Caco-2 (cell line): ENCODE measurements at regions of chr3 and their contacts with region 1.

Region 1: GRCh38 chr3:39981547-39982184 is 172.3 kb downstream of the MYRIP start:
- DNase-seq: no peak
- H3K4me3 ChIP-seq: no peak overlapping the region
- H3K4me3 Mint-ChIP-seq: no peak overlapping the region
- H3K27ac Mint-ChIP-seq: no peak overlapping the region
- H3K4me1 ChIP-seq: peaks cover 25% of the 10 kb centered on the region
- H3K4me1 Mint-ChIP-seq: peaks cover 35% of the 10 kb centered on the region
- H3K27me3 ChIP-seq: no peaks in the 10 kb centered on the region
- H3K27me3 Mint-ChIP-seq: no peaks in the 10 kb centered on the region
- CTCF ChIP-seq: no peak

Region 2: GRCh38 chr3:39631136-39631535 is 350.5 kb before region 1 on chr3:
- CTCF ChIA-PET with region 1: no interaction called
- POLR2A ChIA-PET with region 1: no interaction called
- intact Hi-C with region 1: no loop called
- DNase-seq: no peak
- H3K4me3 ChIP-seq: no peak overlapping the region
- H3K4me3 Mint-ChIP-seq: no peak overlapping the region
- H3K27ac Mint-ChIP-seq: no peak overlapping the region
- H3K4me1 ChIP-seq: no peaks in the 10 kb centered on the region
- H3K4me1 Mint-ChIP-seq: no peaks in the 10 kb centered on the region
- H3K27me3 ChIP-seq: no peaks in the 10 kb centered on the region
- H3K27me3 Mint-ChIP-seq: peaks cover 3% of the 10 kb centered on the region
- CTCF ChIP-seq: no peak

Region 3: DNA sequence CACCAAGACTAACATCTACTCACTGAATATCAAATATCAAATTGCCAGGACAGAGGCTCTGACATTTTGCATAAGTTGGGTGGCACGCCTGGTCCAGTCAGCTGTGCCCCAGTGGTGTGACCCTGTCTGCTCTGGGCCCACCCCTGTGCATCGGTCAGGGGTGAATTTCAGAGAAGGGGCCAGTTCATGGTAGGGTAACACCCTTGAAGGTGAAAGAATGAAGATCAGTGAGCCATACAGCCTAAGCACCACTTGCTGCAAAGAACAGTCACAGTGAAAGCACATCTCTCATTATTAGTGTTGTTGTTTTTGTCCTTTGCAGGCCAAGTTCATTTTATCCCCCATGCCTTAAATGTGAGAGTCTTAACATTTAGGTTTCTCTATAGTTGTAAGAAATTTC is 85.5 kb before region 1 on chr3:
- CTCF ChIA-PET with region 1: no interaction called
- POLR2A ChIA-PET with region 1: no interaction called
- intact Hi-C with region 1: no loop called
- DNase-seq: no peak
- H3K4me3 ChIP-seq: no peak overlapping the region
- H3K4me3 Mint-ChIP-seq: no peak overlapping the region
- H3K27ac Mint-ChIP-seq: no peak overlapping the region
- H3K4me1 ChIP-seq: no peaks in the 10 kb centered on the region
- H3K4me1 Mint-ChIP-seq: no peaks in the 10 kb centered on the region
- H3K27me3 ChIP-seq: no peaks in the 10 kb centered on the region
- H3K27me3 Mint-ChIP-seq: no peaks in the 10 kb centered on the region
- CTCF ChIP-seq: no peak

Region 4: DNA sequence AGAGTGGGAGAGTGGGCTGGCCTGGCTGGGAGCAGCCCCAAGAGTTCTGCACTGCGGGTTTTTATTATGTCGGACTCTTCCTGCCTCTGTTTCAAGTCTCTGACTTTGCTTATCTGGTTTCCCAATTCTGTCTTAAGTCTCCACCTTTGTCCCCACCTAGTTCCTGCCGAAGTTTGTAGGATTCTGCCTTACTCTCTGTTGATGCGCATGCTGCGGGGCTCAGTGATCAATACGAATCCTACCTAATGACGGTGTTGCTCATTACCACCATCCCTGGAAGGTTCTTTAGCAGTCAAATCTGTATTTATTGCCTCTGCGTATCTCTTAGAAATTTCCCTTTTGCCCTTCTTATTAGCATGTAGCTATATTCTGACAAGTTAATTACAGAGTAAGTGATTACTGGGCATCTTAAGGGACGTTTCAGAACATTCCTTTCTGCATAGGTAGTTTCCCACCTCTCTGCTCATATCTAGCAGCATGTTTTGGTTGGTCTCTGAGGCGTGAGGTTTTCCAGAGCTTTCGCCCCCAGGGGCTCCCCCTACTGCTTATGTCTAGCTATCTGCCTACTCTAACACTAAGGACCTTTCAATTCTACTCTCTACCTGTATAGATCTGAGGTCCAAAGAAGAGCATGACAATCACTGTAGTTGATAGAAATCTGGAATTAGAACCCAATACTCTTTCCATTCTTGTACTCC is 91.8 kb after region 1 on chr3:
- CTCF ChIA-PET with region 1: no interaction called
- POLR2A ChIA-PET with region 1: no interaction called
- intact Hi-C with region 1: no loop called
- DNase-seq: peak in 1 of 2 experiments; percentile 38
- H3K4me3 ChIP-seq: no peak overlapping the region
- H3K4me3 Mint-ChIP-seq: no peak overlapping the region
- H3K27ac Mint-ChIP-seq: no peak overlapping the region
- H3K4me1 ChIP-seq: no peaks in the 10 kb centered on the region
- H3K4me1 Mint-ChIP-seq: peaks cover under 1% of the 10 kb centered on the region
- H3K27me3 ChIP-seq: no peaks in the 10 kb centered on the region
- H3K27me3 Mint-ChIP-seq: no peaks in the 10 kb centered on the region
- CTCF ChIP-seq: peak; percentile 31 to 64

Region 5: DNA sequence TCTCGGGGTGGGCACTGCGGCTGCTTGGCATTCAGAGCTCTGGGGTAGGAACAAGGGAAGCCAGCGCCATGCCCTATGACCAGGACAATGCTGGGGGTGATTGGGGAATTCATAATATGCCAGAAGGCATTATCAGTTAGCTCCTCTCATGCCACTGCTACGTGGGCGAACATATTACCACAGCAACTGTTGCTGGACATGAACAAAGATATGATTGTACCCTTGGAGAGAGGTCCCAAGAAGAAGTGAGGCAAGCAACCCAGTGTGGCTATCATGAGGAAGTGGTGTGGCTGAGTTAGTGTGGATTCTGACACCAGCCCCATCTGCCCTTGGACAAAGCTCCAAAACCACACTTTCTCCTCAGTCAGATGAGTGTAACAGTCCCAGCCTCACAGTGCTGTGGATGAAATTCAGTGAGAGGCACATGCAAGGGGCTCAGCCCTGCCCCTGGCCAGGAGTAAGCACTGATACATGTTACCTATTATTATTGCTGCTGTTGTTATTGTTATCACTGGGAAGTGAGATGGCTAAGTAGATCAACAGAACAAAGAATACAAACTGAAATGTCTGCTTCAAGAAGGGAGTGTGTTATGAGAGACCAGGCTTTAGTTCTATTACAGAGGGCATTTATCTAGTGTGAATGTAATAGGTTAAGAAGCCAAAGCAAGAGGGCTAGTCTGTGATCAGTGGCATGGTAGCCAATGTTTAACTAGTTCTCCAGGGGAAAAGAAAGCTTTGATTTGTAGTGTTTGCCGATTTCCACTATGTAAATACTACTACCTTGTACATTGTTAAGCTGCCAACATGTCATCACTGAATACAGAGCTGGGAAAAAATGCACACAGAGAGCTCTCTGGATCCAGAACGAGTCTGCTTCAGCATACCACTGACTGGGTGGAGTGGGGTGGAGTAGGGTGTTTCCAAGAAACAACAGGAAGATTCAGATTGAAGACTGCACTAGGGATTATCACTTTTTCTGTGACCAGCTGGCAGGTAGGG is 105.5 kb after region 1 on chr3:
- CTCF ChIA-PET with region 1: no interaction called
- POLR2A ChIA-PET with region 1: no interaction called
- intact Hi-C with region 1: loop called (anchors 5 kb)
- DNase-seq: peak; percentile 62 to 65
- H3K4me3 ChIP-seq: no peak overlapping the region
- H3K4me3 Mint-ChIP-seq: peak overlapping the region; percentile 13
- H3K27ac Mint-ChIP-seq: peak overlapping the region; percentile 87
- H3K4me1 ChIP-seq: peaks cover 26% of the 10 kb centered on the region
- H3K4me1 Mint-ChIP-seq: peaks cover 31% of the 10 kb centered on the region
- H3K27me3 ChIP-seq: no peaks in the 10 kb centered on the region
- H3K27me3 Mint-ChIP-seq: no peaks in the 10 kb centered on the region
- CTCF ChIP-seq: no peak